PC-3 (cell line): ENCODE measurements at regions of chr21 and their contacts with region 1.

Region 1: GRCh38 chr21:31731802-31732596 is at the start of gene SCAF4:
- DNase-seq: peak; percentile 91
- ATAC-seq: peak; percentile 87
- H3K4me3 ChIP-seq: peak within 1 kb of the TSS; percentile 80
- H3K27ac ChIP-seq: peak within 1 kb of the TSS; percentile 65
- H3K4me1 ChIP-seq: peaks cover 25% of the 10 kb centered on the region
- H3K27me3 ChIP-seq: no peaks in the 10 kb centered on the region
- CTCF ChIP-seq: no peak
- total RNA-seq, gene SCAF4: 11.2 and 18.2 TPM in 2 replicates

Region 2: GRCh38 chr21:31235671-31236521 is 496.1 kb before region 1 on chr21:
- CTCF ChIA-PET with region 1: no interaction called
- POLR2A ChIA-PET with region 1: no interaction called
- intact Hi-C with region 1: no loop called
- DNase-seq: peak; percentile 84
- ATAC-seq: peak; percentile 93
- H3K4me3 ChIP-seq: no peak overlapping the region
- H3K27ac ChIP-seq: peak overlapping the region; percentile 45
- H3K4me1 ChIP-seq: peaks cover 18% of the 10 kb centered on the region
- H3K27me3 ChIP-seq: no peaks in the 10 kb centered on the region
- CTCF ChIP-seq: no peak

Region 3: GRCh38 chr21:31659536-31660258 is 72.3 kb before region 1 on chr21 and contains the start of gene SOD1:
- CTCF ChIA-PET with region 1: no interaction called
- POLR2A ChIA-PET with region 1: no interaction called
- intact Hi-C with region 1: loop called (anchors 2 kb)
- DNase-seq: peak; percentile 95
- ATAC-seq: peak; percentile 91
- H3K4me3 ChIP-seq: peak within 1 kb of the TSS; percentile 86
- H3K27ac ChIP-seq: peak within 1 kb of the TSS; percentile 53
- H3K4me1 ChIP-seq: peaks cover 38% of the 10 kb centered on the region
- H3K27me3 ChIP-seq: no peaks in the 10 kb centered on the region
- CTCF ChIP-seq: no peak
- total RNA-seq, gene SOD1: 398 and 409 TPM in 2 replicates

Region 4: GRCh38 chr21:31696424-31696823 is 35.6 kb before region 1 on chr21:
- CTCF ChIA-PET with region 1: no interaction called
- POLR2A ChIA-PET with region 1: no interaction called
- intact Hi-C with region 1: loop called (anchors 5 kb)
- DNase-seq: no peak
- ATAC-seq: no peak
- H3K4me3 ChIP-seq: no peak overlapping the region
- H3K27ac ChIP-seq: no peak overlapping the region
- H3K4me1 ChIP-seq: no peaks in the 10 kb centered on the region
- H3K27me3 ChIP-seq: no peaks in the 10 kb centered on the region
- CTCF ChIP-seq: no peak

Region 5: GRCh38 chr21:31713973-31714740 is 17.8 kb before region 1 on chr21:
- CTCF ChIA-PET with region 1: no interaction called
- POLR2A ChIA-PET with region 1: no interaction called
- intact Hi-C with region 1: loop called (anchors 2 kb)
- DNase-seq: peak; percentile 27
- ATAC-seq: peak; percentile 72
- H3K4me3 ChIP-seq: no peak overlapping the region
- H3K27ac ChIP-seq: no peak overlapping the region
- H3K4me1 ChIP-seq: peaks cover 19% of the 10 kb centered on the region
- H3K27me3 ChIP-seq: no peaks in the 10 kb centered on the region
- CTCF ChIP-seq: no peak